ENCODE measurements at regions of chr13 and their contacts with region 1.

Region 1: GRCh38 chr13:110412132-110412914 is 105.2 kb downstream of the COL4A2 start:
- DNase-seq: peak; percentile 93 to 97
- H3K4me3 ChIP-seq: no peak overlapping the region
- H3K27ac ChIP-seq: peak overlapping the region; percentile 85 to 90
- H3K4me1 ChIP-seq: peaks cover 0 to 95% (median 77%) of the 10 kb centered on the region in 4 donors
- H3K27me3 ChIP-seq: no peaks in the 10 kb centered on the region
- CTCF ChIP-seq: peak; percentile 85 to 92

Region 2: GRCh38 chr13:110347535-110348308 is 64.6 kb before region 1 on chr13:
- intact Hi-C with region 1: loop called (anchors 5 kb)
- DNase-seq: peak; percentile 82 to 92
- H3K4me3 ChIP-seq: no peak overlapping the region
- H3K27ac ChIP-seq: peak overlapping the region; percentile 92 to 93
- H3K4me1 ChIP-seq: peaks cover 6 to 98% (median 55%) of the 10 kb centered on the region in 4 donors
- H3K27me3 ChIP-seq: no peaks in the 10 kb centered on the region
- CTCF ChIP-seq: no peak